Activated B cell treated with CpG ODN at 0.5 μM for 24 hours (primary cell): ENCODE measurements at regions of chr10 and their contacts with region 1.

Region 1: GRCh38 chr10:12195603-12196506 is at the starts of genes CDC123 and NUDT5:
- DNase-seq: peak; percentile 81
- ATAC-seq: peak; percentile 92
- H3K4me3 Mint-ChIP-seq: peak within 1 kb of the TSS; percentile 93
- H3K27ac Mint-ChIP-seq: peak within 1 kb of the TSS; percentile 99
- H3K4me1 Mint-ChIP-seq: peaks cover 49% of the 10 kb centered on the region
- H3K27me3 Mint-ChIP-seq: no peaks in the 10 kb centered on the region
- CTCF ChIP-seq: no peak
- total RNA-seq, gene CDC123: 81.1 and 84.6 TPM in 2 replicates
- total RNA-seq, gene NUDT5: 53.2 and 57.3 TPM in 2 replicates

Region 2: DNA sequence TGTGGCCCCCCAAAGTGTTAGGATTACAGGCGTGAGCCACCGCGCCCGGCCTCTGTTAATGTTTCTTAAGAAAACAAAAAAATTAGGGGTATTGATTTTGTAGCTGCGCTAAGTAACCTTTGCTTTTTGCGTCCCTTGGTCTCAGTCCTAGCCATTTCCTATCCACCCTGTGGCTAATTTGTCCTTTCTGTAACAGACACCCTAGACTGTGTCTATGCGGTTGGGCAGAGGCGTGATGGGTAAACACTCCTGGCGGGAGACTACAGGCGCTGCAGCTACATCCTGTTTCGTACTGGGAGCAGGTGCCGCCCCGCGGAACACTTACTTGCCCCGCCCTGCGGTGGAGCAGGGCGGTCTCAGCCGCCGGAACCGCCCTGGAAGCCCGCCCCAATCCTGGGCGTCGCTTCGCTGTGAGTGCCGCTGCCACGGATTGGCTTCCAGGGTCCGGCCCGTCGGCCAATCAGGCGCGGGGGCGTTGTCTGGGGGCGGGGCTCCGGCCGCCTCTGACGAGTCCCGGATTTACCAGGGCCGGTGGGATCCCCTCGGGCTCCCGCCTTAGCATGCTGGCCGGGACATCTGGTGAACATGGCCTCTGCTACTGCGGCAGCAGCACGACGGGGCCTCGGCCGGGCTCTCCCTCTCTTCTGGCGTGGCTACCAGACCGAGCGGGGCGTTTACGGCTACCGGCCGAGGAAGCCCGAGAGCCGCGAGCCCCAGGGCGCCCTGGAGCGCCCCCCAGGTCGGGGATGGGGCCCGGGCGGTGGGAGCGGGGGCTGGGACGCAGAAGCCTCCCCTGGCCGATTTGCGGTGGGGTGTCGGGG is 127.2 kb before region 1 on chr10 and contains the start of gene DHTKD1:
- CTCF ChIA-PET with region 1: no interaction called
- POLR2A ChIA-PET with region 1: no interaction called
- intact Hi-C with region 1: loop called (anchors 1 kb)
- DNase-seq: peak; percentile 99
- ATAC-seq: peak; percentile 96
- H3K4me3 Mint-ChIP-seq: peak within 1 kb of the TSS; percentile 87
- H3K27ac Mint-ChIP-seq: peak within 1 kb of the TSS; percentile 90
- H3K4me1 Mint-ChIP-seq: peaks cover 44% of the 10 kb centered on the region
- H3K27me3 Mint-ChIP-seq: no peaks in the 10 kb centered on the region
- CTCF ChIP-seq: no peak
- total RNA-seq, gene DHTKD1: 58.2 and 60.7 TPM in 2 replicates

Region 3: GRCh38 chr10:12181065-12181775 is 14.6 kb before region 1 on chr10:
- CTCF ChIA-PET with region 1: no interaction called
- POLR2A ChIA-PET with region 1: no interaction called
- intact Hi-C with region 1: loop called (anchors 1 kb)
- DNase-seq: no peak
- ATAC-seq: peak; percentile 94
- H3K4me3 Mint-ChIP-seq: no peak overlapping the region
- H3K27ac Mint-ChIP-seq: no peak overlapping the region
- H3K4me1 Mint-ChIP-seq: peaks cover 4% of the 10 kb centered on the region
- H3K27me3 Mint-ChIP-seq: no peaks in the 10 kb centered on the region
- CTCF ChIP-seq: no peak

Region 4: DNA sequence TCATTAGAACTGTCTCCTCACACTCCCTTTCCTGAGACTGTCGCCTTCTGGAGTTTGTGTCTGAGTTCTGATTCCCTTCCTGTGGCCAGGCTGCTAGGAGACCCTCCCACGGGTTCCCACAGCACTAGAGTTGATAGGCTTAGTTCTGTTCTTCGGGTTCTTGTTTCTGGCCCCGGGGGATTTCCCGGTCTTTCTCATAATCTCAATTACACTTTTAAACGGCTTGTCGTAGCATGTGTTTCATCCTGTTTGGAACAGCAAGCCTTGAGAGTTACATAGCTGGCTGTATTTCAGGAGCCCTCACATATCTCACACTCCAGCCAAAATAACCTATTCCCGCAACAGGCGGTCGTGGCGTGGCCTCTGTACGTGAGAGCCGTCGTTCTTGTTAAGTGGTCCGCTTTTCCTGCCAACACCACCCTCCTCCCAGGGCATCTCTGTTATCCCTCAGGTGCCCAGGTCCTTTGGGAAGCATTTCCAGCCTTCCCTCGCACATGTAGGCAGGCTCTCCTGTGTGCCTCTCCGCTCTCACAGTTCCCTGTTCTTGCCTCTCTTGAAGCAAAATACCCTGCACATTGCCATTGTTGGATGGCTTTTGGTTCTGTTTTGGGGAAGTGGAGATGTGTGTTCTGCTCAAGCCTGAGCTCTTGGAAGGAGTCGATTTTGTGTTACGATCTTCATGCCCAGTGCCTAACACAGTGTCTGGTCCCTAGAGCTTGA is 46.1 kb after region 1 on chr10:
- CTCF ChIA-PET with region 1: no interaction called
- POLR2A ChIA-PET with region 1: interaction called, 12 read pairs
- intact Hi-C with region 1: loop called (anchors 1 kb)
- DNase-seq: no peak
- ATAC-seq: no peak
- H3K4me3 Mint-ChIP-seq: peak overlapping the region; percentile 29
- H3K27ac Mint-ChIP-seq: peak overlapping the region; percentile 75
- H3K4me1 Mint-ChIP-seq: peaks cover 69% of the 10 kb centered on the region
- H3K27me3 Mint-ChIP-seq: no peaks in the 10 kb centered on the region
- CTCF ChIP-seq: no peak

Region 5: DNA sequence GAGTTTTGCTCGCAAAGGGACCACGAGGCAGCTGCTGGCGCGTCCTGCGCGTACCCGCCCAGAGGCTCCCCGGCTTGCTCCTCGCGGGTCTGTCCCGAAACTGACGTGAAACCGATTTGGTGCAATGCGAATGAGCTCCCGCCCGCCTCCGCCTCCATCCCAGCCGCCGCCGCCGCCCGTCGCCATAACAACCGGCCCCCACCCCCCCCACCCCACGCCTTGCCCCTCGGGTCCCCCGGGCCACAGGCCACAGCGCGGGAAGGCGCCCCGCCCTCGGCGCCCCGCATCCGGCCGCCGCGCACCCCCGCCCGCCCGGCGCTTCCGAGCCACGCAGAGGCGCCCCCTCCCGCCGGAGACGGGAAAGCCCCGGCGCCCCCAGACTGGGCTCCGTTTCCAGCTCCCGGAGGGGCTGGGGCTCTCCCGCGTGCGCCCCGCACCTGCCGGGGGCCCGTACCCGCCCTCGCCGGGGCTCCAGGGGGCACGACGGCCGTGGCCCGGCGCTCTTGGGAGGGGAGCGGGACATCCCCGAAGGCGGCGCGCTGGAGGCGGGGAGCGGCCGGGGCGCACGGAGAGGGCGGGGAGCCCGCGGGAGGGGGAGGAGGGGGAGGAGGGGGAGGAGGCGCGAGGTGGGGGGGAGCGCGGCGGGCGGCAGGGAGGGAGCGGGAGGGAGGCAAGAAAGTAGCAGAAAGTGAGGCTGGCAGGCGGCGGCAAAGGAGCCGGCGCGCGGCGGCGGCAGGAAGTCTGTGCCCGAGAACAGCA is 153.2 kb after region 1 on chr10 and contains the start of gene CAMK1D:
- CTCF ChIA-PET with region 1: no interaction called
- POLR2A ChIA-PET with region 1: interaction called, 8 read pairs
- intact Hi-C with region 1: loop called (anchors 5 kb)
- DNase-seq: peak; percentile 87
- ATAC-seq: peak; percentile 66
- H3K4me3 Mint-ChIP-seq: peak within 1 kb of the TSS; percentile 98
- H3K27ac Mint-ChIP-seq: peak within 1 kb of the TSS; percentile 98
- H3K4me1 Mint-ChIP-seq: peaks cover 61% of the 10 kb centered on the region
- H3K27me3 Mint-ChIP-seq: no peaks in the 10 kb centered on the region
- CTCF ChIP-seq: no peak
- total RNA-seq, gene CAMK1D: 51.7 and 58.8 TPM in 2 replicates